ENCODE measurements at regions of chr12 and their contacts with region 1.

Region 1: GRCh38 chr12:71737197-71737596 is 17.5 kb upstream of the RAB21 start:
- DNase-seq: no peak
- ATAC-seq: no peak

Region 2: GRCh38 chr12:71236133-71236660 is 501.0 kb before region 1 on chr12:
- intact Hi-C with region 1: no loop called
- DNase-seq: no peak
- ATAC-seq: no peak

Region 3: GRCh38 chr12:71691504-71692129 is 45.6 kb before region 1 on chr12:
- intact Hi-C with region 1: loop called (anchors 1 kb)
- DNase-seq: no peak
- ATAC-seq: no peak

Measured in sciatic nerve (tissue), 2 donors.